ENCODE measurements at regions of chr1 and their contacts with region 1.

Region 1: DNA sequence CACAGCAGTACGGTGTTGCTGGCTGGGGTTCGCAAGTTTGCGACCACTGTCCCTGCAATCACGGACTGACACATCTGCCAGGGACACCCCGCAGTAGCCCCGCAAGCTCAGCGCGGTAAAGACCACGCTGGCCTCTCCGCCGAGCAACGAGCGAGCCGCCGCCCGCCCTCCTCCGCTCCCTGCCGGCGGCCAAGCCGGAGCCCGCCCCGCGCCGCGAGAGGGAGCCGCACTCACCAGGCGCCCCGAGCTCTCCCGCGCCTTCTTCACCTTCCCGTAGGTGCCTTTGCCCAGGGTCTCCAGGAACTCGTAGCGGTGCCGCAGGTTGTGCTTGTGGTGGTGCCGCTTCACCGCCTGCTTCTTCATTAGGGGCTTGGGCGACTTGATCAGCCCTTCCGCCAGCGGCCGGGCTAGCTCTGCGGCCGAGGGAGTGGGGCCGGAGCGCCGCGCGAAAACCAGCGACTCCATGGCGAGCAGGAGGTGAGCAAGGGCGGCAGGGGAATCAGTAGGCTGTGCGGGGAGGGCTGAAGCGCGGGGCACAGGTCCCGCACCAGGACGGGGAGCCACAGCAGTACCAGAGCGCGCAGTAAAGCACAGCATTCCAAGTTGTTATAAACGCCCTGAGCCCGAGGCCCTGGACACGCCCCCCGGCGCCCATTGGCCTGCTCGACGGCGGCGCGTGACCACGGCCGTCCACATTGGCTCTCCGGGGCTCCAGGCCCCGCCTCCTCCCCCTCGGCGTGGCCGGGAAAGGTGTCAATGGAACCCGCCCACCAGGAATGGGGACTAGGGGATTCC is at the start of gene NUAK2:
- DNase-seq: peak; percentile 56 to 92 (median 86)
- ATAC-seq: peak; percentile 88
- H3K4me3 ChIP-seq: peak within 1 kb of the TSS; percentile 73 to 99
- H3K4me3 Mint-ChIP-seq: peak within 1 kb of the TSS; percentile 98
- H3K27ac ChIP-seq: peak within 1 kb of the TSS; percentile 68 to 72
- H3K27ac Mint-ChIP-seq: peak within 1 kb of the TSS; percentile 96
- H3K4me1 ChIP-seq: peaks cover 50% of the 10 kb centered on the region
- H3K4me1 Mint-ChIP-seq: peaks cover 71% of the 10 kb centered on the region
- H3K27me3 ChIP-seq: no peaks in the 10 kb centered on the region
- H3K27me3 Mint-ChIP-seq: no peaks in the 10 kb centered on the region
- CTCF ChIP-seq: peak; percentile 32
- total RNA-seq, gene NUAK2: 17.1 to 18.3 TPM

Region 2: DNA sequence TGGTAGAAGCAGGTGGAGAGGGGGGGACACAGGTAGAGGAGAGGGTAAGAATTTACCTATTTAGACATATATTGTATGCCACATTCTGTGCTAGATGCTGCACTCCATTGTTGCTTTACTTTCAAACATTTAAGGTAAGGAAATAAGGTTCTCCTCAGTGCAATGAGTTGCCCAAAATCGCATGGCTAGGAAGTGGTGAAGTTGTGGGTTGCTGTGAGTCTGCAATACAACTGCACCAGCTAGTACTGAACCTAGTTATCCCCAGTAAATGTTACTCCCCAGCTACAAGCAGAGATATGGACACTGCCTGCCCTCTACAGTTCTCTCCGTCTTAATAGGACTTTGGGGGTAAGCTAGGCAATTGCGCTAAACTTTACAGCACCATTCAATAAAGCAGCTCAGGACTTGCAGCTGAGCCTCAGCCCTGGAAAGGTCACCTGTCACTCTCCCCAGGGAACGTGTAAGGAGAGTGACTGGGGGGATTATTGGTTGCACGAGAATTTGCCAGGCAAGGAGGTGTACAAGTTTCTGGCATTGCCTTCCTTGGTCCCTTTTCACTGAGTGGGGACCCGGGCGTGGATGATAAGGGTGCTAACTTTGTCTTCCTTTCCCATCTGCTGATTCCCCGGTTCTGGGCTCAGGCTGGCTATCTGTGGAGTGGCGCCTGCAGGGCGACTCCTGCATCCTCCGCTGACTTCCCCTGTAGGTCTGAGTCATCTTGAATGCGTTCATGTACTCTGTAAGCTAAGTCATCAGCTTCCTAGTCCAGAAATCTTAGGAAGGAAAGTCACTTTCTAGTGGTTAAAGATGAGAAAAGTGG is 349.6 kb before region 1 on chr1:
- CTCF ChIA-PET with region 1: no interaction called
- POLR2A ChIA-PET with region 1: no interaction called
- intact Hi-C with region 1: no loop called
- DNase-seq: no peak
- ATAC-seq: no peak
- H3K4me3 ChIP-seq: no peak overlapping the region
- H3K4me3 Mint-ChIP-seq: no peak overlapping the region
- H3K27ac ChIP-seq: no peak overlapping the region
- H3K27ac Mint-ChIP-seq: no peak overlapping the region
- H3K4me1 ChIP-seq: no peaks in the 10 kb centered on the region
- H3K4me1 Mint-ChIP-seq: no peaks in the 10 kb centered on the region
- H3K27me3 ChIP-seq: no peaks in the 10 kb centered on the region
- H3K27me3 Mint-ChIP-seq: peaks cover 22% of the 10 kb centered on the region
- CTCF ChIP-seq: no peak

Region 3: GRCh38 chr1:205121660-205122488 is 199.5 kb before region 1 on chr1 and contains the start of gene RBBP5:
- CTCF ChIA-PET with region 1: interaction called, 3 read pairs
- POLR2A ChIA-PET with region 1: no interaction called
- intact Hi-C with region 1: loop called in 1 of 2 experiments (anchors 10 kb)
- DNase-seq: peak; percentile 92 to 98 (median 95)
- ATAC-seq: peak; percentile 93
- H3K4me3 ChIP-seq: peak within 1 kb of the TSS; percentile 91 to 95
- H3K4me3 Mint-ChIP-seq: peak within 1 kb of the TSS; percentile 96
- H3K27ac ChIP-seq: peak within 1 kb of the TSS; percentile 88 to 97
- H3K27ac Mint-ChIP-seq: peak within 1 kb of the TSS; percentile 100
- H3K4me1 ChIP-seq: peaks cover 26% of the 10 kb centered on the region
- H3K4me1 Mint-ChIP-seq: peaks cover 46% of the 10 kb centered on the region
- H3K27me3 ChIP-seq: no peaks in the 10 kb centered on the region
- H3K27me3 Mint-ChIP-seq: no peaks in the 10 kb centered on the region
- CTCF ChIP-seq: peak; percentile 59
- total RNA-seq, gene RBBP5: 23.9 to 25.7 TPM

Region 4: DNA sequence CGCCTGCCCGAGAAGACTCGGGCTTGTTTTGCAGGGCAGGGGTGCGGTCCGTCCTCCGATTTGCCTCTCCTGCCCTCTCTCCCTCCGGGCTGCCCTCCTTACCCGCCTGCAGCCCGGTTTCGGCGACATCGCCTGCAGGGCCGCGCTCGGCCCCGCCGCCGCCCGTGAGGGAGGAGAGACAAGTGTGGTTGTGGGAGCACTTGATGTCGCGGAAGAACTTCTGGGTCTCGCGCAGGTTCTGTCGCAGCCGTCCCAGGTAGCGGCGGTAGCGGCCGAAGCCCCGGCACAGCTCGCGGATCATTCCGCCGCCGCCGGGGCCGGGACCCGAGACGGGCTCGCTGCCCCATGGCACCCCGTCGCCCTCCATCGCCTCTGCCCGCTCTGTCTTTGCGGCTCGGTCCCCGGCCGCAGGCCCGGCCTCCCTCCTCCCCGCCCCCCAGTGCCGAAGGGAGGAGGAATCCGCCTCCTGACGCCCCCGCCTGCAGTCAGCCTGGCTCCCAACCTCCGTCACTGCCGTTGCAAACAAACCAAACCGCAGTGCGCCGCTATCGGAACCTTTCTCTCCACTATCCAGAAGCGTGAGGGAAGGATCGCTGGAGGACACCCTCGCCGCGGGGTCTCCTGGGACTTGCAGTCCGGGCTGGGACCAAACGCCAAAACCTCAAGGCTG is 110.1 kb before region 1 on chr1 and contains the start of gene DSTYK:
- CTCF ChIA-PET with region 1: interaction called, 3 read pairs
- POLR2A ChIA-PET with region 1: no interaction called
- intact Hi-C with region 1: loop called (anchors 2 to 5 kb)
- DNase-seq: peak; percentile 83 to 96 (median 91)
- ATAC-seq: peak; percentile 92
- H3K4me3 ChIP-seq: peak within 1 kb of the TSS; percentile 55 to 93
- H3K4me3 Mint-ChIP-seq: peak within 1 kb of the TSS; percentile 96
- H3K27ac ChIP-seq: peak within 1 kb of the TSS; percentile 58 to 80
- H3K27ac Mint-ChIP-seq: peak within 1 kb of the TSS; percentile 98
- H3K4me1 ChIP-seq: peaks cover 15% of the 10 kb centered on the region
- H3K4me1 Mint-ChIP-seq: peaks cover 50% of the 10 kb centered on the region
- H3K27me3 ChIP-seq: no peaks in the 10 kb centered on the region
- H3K27me3 Mint-ChIP-seq: no peaks in the 10 kb centered on the region
- CTCF ChIP-seq: no peak
- total RNA-seq, gene DSTYK: 15.4 to 17.2 TPM

Region 5: DNA sequence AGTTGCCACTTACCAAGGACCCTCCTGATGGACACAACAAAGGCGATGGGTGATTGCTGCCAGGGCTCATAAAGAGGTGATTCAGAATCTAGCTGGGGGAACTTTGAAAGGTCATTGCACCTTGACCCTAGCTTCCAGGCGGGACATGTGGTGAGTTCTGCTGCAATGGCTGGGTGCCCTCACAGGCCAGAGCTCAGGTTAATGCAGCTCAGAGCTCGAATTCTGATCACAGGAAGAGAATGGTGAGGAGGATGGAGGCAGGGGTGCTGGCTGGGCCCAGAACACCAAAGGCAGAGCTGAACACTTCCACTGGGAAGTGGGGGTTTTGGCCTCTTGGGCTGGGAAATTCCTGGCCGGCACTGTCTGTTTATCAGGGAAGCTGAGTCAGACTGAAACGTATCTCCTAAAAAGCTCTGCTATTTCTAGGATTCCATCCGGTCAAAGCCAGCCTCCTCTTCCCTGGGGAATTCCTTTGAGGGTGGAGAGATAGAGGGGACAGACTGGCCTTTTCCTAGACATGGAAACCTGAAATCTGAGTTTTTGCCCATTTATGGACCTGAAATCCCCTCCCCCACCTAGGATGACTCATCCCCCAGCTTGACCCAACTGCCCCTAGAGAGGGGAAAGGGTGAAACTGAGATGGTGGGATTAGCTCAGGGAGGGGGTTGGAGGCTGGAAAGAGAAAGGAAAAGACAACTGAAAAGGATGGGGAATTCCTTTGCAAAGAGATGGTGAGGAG is 27.0 kb before region 1 on chr1:
- CTCF ChIA-PET with region 1: interaction called, 216 read pairs
- POLR2A ChIA-PET with region 1: interaction called, 161 read pairs
- intact Hi-C with region 1: no loop called
- DNase-seq: no peak
- ATAC-seq: no peak
- H3K4me3 ChIP-seq: no peak overlapping the region
- H3K4me3 Mint-ChIP-seq: no peak overlapping the region
- H3K27ac ChIP-seq: no peak overlapping the region
- H3K27ac Mint-ChIP-seq: peak overlapping the region; percentile 60
- H3K4me1 ChIP-seq: peaks cover 71% of the 10 kb centered on the region
- H3K4me1 Mint-ChIP-seq: peaks cover 77% of the 10 kb centered on the region
- H3K27me3 ChIP-seq: no peaks in the 10 kb centered on the region
- H3K27me3 Mint-ChIP-seq: no peaks in the 10 kb centered on the region
- CTCF ChIP-seq: no peak

Region 6: GRCh38 chr1:205300886-205301821 is 20.2 kb before region 1 on chr1:
- CTCF ChIA-PET with region 1: interaction called, 41 read pairs
- POLR2A ChIA-PET with region 1: interaction called, 16 read pairs
- intact Hi-C with region 1: no loop called
- DNase-seq: no peak
- ATAC-seq: no peak
- H3K4me3 ChIP-seq: no peak overlapping the region
- H3K4me3 Mint-ChIP-seq: no peak overlapping the region
- H3K27ac ChIP-seq: no peak overlapping the region
- H3K27ac Mint-ChIP-seq: peak overlapping the region; percentile 41
- H3K4me1 ChIP-seq: peaks cover 32% of the 10 kb centered on the region
- H3K4me1 Mint-ChIP-seq: peaks cover 58% of the 10 kb centered on the region
- H3K27me3 ChIP-seq: no peaks in the 10 kb centered on the region
- H3K27me3 Mint-ChIP-seq: no peaks in the 10 kb centered on the region
- CTCF ChIP-seq: no peak

Region 7: GRCh38 chr1:205335643-205336091 is 14.3 kb after region 1 on chr1:
- CTCF ChIA-PET with region 1: interaction called, 103 read pairs
- POLR2A ChIA-PET with region 1: interaction called, 3 read pairs
- intact Hi-C with region 1: no loop called
- DNase-seq: peak; percentile 52 to 86 (median 80)
- ATAC-seq: peak; percentile 99
- H3K4me3 ChIP-seq: no peak overlapping the region
- H3K4me3 Mint-ChIP-seq: no peak overlapping the region
- H3K27ac ChIP-seq: no peak overlapping the region
- H3K27ac Mint-ChIP-seq: no peak overlapping the region
- H3K4me1 ChIP-seq: no peaks in the 10 kb centered on the region
- H3K4me1 Mint-ChIP-seq: no peaks in the 10 kb centered on the region
- H3K27me3 ChIP-seq: no peaks in the 10 kb centered on the region
- H3K27me3 Mint-ChIP-seq: no peaks in the 10 kb centered on the region
- CTCF ChIP-seq: peak; percentile 85

Measured in CD8-positive, alpha-beta T cell (primary cell).